ENCODE measurements at regions of chrX and their contacts with region 1.

Region 1: DNA sequence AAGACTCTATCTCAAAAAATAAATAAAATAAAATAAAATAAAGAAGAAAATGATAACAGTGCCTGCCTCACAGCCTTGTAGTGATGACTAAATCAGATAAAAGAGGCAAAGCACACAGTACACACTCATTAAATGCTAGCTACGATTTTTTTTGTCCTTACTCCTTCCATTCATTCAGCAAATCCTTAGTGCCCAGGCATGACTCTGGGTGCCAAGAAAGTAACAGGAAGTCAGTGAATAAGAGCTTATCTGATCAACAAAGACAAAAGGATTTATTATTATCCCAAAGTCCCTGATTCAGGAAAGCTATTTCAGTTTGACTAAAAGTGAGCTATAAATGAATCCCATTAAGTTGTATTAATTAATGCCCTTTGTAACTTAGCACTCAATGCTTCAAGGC is 92.7 kb downstream of the SH3KBP1 start:
- DNase-seq: no peak
- ATAC-seq: no peak
- H3K4me3 Mint-ChIP-seq: no peak overlapping the region
- H3K27ac Mint-ChIP-seq: peak overlapping the region; percentile 99
- H3K4me1 Mint-ChIP-seq: peaks cover 58% of the 10 kb centered on the region
- H3K27me3 Mint-ChIP-seq: no peaks in the 10 kb centered on the region

Region 2: GRCh38 chrX:19750028-19750782 is 44.5 kb before region 1 on chrX:
- CTCF ChIA-PET with region 1: interaction called, 10 read pairs
- DNase-seq: no peak
- ATAC-seq: no peak
- H3K4me3 Mint-ChIP-seq: no peak overlapping the region
- H3K27ac Mint-ChIP-seq: peak overlapping the region; percentile 96
- H3K4me1 Mint-ChIP-seq: peaks cover 92% of the 10 kb centered on the region
- H3K27me3 Mint-ChIP-seq: no peaks in the 10 kb centered on the region

Region 3: DNA sequence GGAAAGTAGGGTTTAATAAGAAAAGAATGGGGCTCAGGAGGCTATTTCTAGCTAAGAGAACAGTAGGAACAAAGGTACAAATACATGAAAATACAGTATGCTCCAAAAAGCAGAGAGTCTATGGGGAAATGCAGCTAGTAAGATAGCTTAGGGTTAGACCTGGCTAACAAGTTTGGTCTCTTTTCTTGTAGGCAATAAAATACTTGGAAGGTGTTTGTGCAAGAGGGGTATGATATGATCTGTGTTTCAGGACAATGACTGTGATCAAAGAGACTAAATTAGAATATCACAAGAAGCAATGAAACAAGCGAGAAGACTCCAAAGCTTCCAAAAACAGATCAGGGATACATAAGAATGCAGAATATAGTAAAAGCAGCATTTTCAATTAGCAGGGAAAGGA is 126.3 kb after region 1 on chrX:
- CTCF ChIA-PET with region 1: no interaction called
- DNase-seq: no peak
- ATAC-seq: no peak
- H3K4me3 Mint-ChIP-seq: no peak overlapping the region
- H3K27ac Mint-ChIP-seq: no peak overlapping the region
- H3K4me1 Mint-ChIP-seq: no peaks in the 10 kb centered on the region
- H3K27me3 Mint-ChIP-seq: no peaks in the 10 kb centered on the region